ENCODE measurements at regions of chr22 and their contacts with region 1.

Region 1: DNA sequence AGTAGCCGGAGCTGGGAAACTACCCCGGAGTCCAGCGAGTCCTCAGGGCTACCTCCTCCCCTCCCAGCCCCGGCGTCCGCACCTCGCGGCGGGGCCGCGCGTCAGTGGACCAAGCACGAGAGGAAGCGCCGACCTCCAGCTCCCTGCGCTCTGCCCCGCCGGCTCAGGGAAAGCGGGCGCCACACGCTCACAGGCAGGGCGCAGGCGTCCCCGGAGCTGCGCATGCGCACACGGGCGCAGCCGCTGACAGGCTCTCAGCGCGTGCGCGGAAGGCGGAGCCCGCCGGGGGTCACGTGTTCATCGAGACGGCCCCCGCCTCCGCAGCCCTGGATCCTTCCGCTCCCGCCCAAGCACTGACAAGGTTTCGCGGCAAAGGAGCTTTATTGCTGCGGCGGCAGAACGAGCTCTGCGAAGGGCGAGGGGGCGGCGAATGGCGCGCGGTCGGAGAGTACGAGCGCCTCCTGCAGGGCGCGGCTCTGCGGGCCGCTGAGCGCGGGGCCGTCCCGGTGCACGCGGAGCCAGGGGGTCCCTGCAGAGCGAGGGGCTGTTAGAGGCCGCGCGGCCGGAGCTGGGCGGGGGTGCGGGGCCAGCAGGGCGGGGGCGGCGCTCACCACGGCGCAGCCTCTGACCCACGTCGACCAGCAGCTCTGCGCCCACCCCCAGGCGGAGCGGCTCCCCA is at the start of gene SCO2:
- DNase-seq: peak; percentile 96 to 99 (median 97)
- H3K4me3 ChIP-seq: peak within 1 kb of the TSS; percentile 64
- H3K4me3 Mint-ChIP-seq: peak within 1 kb of the TSS; percentile 85 to 93 (median 89)
- H3K27ac ChIP-seq: peak within 1 kb of the TSS; percentile 80
- H3K27ac Mint-ChIP-seq: peak within 1 kb of the TSS; percentile 85 to 99 (median 88)
- H3K4me1 ChIP-seq: peaks cover 26% of the 10 kb centered on the region
- H3K4me1 Mint-ChIP-seq: peaks cover 21 to 38% (median 27%) of the 10 kb centered on the region in 3 donors
- H3K27me3 ChIP-seq: no peaks in the 10 kb centered on the region
- H3K27me3 Mint-ChIP-seq: no peaks in the 10 kb centered on the region
- total RNA-seq, gene SCO2: 2.4 to 3.5 TPM

Region 2: GRCh38 chr22:50326959-50327710 is 198.4 kb before region 1 on chr22 and contains the start of gene DENND6B:
- CTCF ChIA-PET with region 1: interaction called, 10 read pairs
- POLR2A ChIA-PET with region 1: no interaction called
- DNase-seq: peak; percentile 58 to 73 (median 64)
- H3K4me3 ChIP-seq: peak within 1 kb of the TSS; percentile 53
- H3K4me3 Mint-ChIP-seq: peak within 1 kb of the TSS; percentile 78 to 91 (median 84)
- H3K27ac ChIP-seq: peak within 1 kb of the TSS; percentile 61
- H3K27ac Mint-ChIP-seq: peak within 1 kb of the TSS; percentile 37 to 95 (median 70)
- H3K4me1 ChIP-seq: peaks cover 7% of the 10 kb centered on the region
- H3K4me1 Mint-ChIP-seq: peaks cover 4 to 13% (median 13%) of the 10 kb centered on the region in 3 donors
- H3K27me3 ChIP-seq: no peaks in the 10 kb centered on the region
- H3K27me3 Mint-ChIP-seq: peaks cover 3 to 6% of the 10 kb centered on the region in 2 donors
- total RNA-seq, gene DENND6B: 3.9 to 4.3 TPM

Region 3: GRCh38 chr22:50469377-50470305 is 55.9 kb before region 1 on chr22:
- CTCF ChIA-PET with region 1: interaction called, 45 read pairs
- POLR2A ChIA-PET with region 1: interaction called, 18 read pairs
- DNase-seq: peak; percentile 97 to 100 (median 98)
- H3K4me3 ChIP-seq: peak overlapping the region; percentile 63
- H3K4me3 Mint-ChIP-seq: peak overlapping the region; percentile 79 to 98 (median 83)
- H3K27ac ChIP-seq: peak overlapping the region; percentile 51
- H3K27ac Mint-ChIP-seq: peak overlapping the region; percentile 78 to 99 (median 97)
- H3K4me1 ChIP-seq: peaks cover 59% of the 10 kb centered on the region
- H3K4me1 Mint-ChIP-seq: peaks cover 60 to 78% (median 64%) of the 10 kb centered on the region in 3 donors
- H3K27me3 ChIP-seq: no peaks in the 10 kb centered on the region
- H3K27me3 Mint-ChIP-seq: no peaks in the 10 kb centered on the region

Region 4: GRCh38 chr22:50507991-50508884 is 17.3 kb before region 1 on chr22 and contains the start of gene NCAPH2:
- CTCF ChIA-PET with region 1: interaction called, 91 read pairs
- POLR2A ChIA-PET with region 1: interaction called, 93 read pairs
- DNase-seq: peak in 4 of 5 donors; percentile 96 to 98 (median 96)
- H3K4me3 ChIP-seq: peak within 1 kb of the TSS; percentile 80
- H3K4me3 Mint-ChIP-seq: peak within 1 kb of the TSS; percentile 92 to 99 (median 94)
- H3K27ac ChIP-seq: peak within 1 kb of the TSS; percentile 88
- H3K27ac Mint-ChIP-seq: peak within 1 kb of the TSS; percentile 93 to 100 (median 98)
- H3K4me1 ChIP-seq: peaks cover 23% of the 10 kb centered on the region
- H3K4me1 Mint-ChIP-seq: peaks cover 17 to 32% (median 19%) of the 10 kb centered on the region in 3 donors
- H3K27me3 ChIP-seq: no peaks in the 10 kb centered on the region
- H3K27me3 Mint-ChIP-seq: peaks cover 0 to 1% of the 10 kb centered on the region in 2 donors
- total RNA-seq, gene NCAPH2: 155 to 165 TPM

Region 5: GRCh38 chr22:50562523-50563412 is 37.2 kb after region 1 on chr22 and contains the start of gene SYCE3:
- CTCF ChIA-PET with region 1: interaction called, 58 read pairs
- POLR2A ChIA-PET with region 1: interaction called, 23 read pairs
- DNase-seq: peak; percentile 95 to 98 (median 97)
- H3K4me3 ChIP-seq: peak within 1 kb of the TSS; percentile 85
- H3K4me3 Mint-ChIP-seq: peak within 1 kb of the TSS; percentile 81 to 98 (median 92)
- H3K27ac ChIP-seq: peak within 1 kb of the TSS; percentile 29
- H3K27ac Mint-ChIP-seq: peak within 1 kb of the TSS; percentile 74 to 98 (median 90)
- H3K4me1 ChIP-seq: no peaks in the 10 kb centered on the region
- H3K4me1 Mint-ChIP-seq: peaks cover 18 to 21% (median 19%) of the 10 kb centered on the region in 3 donors
- H3K27me3 ChIP-seq: no peaks in the 10 kb centered on the region
- H3K27me3 Mint-ChIP-seq: peaks cover 0 to 4% of the 10 kb centered on the region in 2 donors
- total RNA-seq, gene SYCE3: not detected

Region 6: DNA sequence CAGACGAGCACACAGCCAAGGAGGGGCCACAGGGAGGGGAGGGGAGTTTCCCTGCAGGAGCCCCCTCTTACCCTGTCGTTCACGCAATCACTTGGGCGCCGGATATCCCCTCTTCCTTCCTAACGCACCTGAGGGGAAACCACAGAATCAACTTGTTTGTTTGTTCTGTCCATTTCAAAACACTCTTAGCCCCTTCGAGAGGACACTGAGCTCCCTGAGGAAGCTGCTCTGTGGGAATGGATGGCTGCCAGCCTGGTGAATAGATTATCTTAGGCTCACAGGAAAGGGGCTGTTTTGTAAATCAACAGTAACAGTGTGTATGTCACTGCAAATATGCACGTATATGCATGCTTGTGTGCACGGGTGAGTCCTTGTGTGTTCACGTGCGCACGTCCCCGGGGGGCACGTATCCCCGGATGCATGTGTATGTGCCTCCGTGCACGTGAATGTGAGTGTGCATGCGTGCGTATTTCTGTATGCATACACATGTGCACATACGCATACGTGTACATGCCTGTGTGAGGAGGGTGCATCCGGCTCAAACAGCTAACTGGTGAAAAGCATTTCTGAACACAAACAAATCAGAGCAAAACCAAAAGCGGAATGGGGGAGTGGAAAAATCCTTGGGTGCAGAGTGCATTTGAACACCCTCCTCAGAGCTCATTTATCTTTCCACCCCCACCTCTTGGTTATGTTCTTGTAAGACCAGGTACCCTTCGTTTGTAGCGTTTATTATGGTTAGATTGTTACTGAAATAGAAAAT is 95.2 kb after region 1 on chr22:
- CTCF ChIA-PET with region 1: interaction called, 73 read pairs
- POLR2A ChIA-PET with region 1: interaction called, 33 read pairs
- DNase-seq: peak; percentile 80 to 95 (median 90)
- H3K4me3 ChIP-seq: peak overlapping the region; percentile 70
- H3K4me3 Mint-ChIP-seq: peak overlapping the region; percentile 87 to 92 (median 90)
- H3K27ac ChIP-seq: peak overlapping the region; percentile 76
- H3K27ac Mint-ChIP-seq: peak overlapping the region; percentile 90 to 99 (median 98)
- H3K4me1 ChIP-seq: peaks cover 35% of the 10 kb centered on the region
- H3K4me1 Mint-ChIP-seq: peaks cover 31 to 41% (median 31%) of the 10 kb centered on the region in 3 donors
- H3K27me3 ChIP-seq: no peaks in the 10 kb centered on the region
- H3K27me3 Mint-ChIP-seq: peaks cover 0 to 2% of the 10 kb centered on the region in 2 donors